Activated T-helper 1 cell treated with anti-CD3 and anti-CD28 coated beads, Interleukin-12 subunit alpha, Interleukin-12 subunit beta, Interleukin-2, Interleukin-4 antibody, amounts not matched to agents 30 ng/mL and 10 ng/mL and 1 ng/mL, durations not matched to agents 14 hours and 24 hours and 36 hours (primary cell): ENCODE measurements at regions of chr1 and their contacts with region 1.

Region 1: DNA sequence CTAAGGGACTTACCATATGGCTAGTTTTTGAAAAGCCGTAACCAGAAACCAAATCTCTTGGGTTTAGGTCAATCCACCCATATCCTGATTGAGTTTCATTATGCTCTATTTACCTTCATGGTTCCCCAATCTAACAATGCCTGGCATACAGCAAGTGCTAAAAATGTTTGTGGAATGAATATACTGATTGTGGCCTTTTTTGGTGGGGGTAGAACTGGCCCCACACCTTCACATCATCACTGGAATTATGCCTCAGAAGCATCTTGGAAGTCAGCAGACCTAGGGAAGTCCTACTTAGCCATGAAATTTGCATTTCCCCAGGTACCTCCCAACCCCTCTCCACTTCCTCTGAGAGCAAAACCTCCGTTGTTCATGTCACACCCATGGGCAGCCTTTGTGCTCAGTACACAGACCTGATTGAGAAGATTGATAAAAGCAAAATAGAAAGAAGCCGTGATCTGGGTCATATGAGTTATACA is 17.8 kb upstream of the SLAMF1 start:
- DNase-seq: no peak
- H3K4me3 Mint-ChIP-seq: peak overlapping the region; percentile 81
- H3K27ac Mint-ChIP-seq: peak overlapping the region; percentile 96
- H3K4me1 Mint-ChIP-seq: peaks cover 84% of the 10 kb centered on the region
- H3K27me3 Mint-ChIP-seq: no peaks in the 10 kb centered on the region

Region 2: DNA sequence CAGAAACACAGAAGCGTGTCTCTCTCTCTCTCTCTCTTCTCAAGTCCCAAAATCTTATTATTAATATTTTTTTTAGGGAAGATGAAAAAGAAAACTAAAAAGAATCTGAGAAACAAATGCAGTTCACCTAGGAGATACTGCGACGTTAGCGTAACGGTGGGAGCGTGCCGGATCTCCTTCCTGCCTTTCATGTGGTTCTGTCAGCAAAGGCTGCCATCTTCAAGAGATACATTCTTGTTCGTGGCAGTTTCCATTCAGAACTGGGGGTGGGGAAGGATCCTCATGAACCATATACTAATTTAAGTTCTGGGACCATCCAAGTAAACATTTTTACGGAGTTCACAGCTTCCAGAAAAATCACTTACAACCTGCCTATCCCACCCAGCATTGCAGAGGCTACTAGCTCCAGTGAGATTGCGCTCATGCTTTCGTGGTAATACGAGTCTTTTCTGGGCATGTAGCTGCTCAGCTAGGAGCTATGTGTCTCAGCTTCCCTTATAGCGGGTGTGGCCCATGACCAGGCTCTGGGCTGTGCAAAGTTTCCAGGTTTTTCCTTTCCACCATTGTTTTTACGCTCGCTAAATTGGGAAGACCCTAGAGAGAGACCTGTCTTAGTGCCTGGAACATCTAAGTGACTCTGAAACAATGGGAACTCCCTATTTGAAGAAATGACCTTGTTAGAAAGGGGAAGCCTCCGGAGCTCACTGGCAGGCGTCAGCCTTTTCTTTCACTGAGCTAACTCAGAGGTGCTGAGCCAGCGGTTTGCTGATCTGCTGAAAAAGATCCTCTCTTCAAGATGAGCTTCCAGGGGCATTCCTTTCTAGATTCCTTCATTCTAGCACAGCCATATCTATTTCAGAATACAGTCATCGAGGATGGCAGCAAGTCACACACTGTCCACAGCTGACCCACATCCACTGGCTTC is 35.1 kb before region 1 on chr1:
- intact Hi-C with region 1: loop called (anchors 1 kb)
- DNase-seq: peak; percentile 76
- H3K4me3 Mint-ChIP-seq: peak overlapping the region; percentile 69
- H3K27ac Mint-ChIP-seq: peak overlapping the region; percentile 99
- H3K4me1 Mint-ChIP-seq: peaks cover 98% of the 10 kb centered on the region
- H3K27me3 Mint-ChIP-seq: no peaks in the 10 kb centered on the region

Region 3: DNA sequence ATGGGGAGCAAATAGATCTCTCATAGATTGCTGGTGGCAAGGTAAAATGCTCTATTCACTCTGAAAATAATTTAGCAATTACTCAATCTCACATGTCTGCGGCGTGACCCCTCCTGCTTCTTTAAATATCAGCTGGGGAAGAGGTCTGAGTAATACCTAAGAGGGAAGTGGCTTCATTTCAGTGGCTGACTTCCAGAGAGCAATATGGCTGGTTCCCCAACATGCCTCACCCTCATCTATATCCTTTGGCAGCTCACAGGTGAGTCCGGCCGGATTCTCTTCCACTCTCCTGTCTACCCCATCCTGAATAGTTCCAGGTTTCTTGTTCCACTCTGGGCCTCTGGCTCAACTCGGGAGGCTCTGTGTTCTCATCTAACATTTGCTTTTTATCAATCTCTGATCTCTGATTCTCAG is 74.5 kb after region 1 on chr1 and contains the start of gene SLAMF7:
- intact Hi-C with region 1: no loop called
- DNase-seq: no peak
- H3K4me3 Mint-ChIP-seq: peak within 1 kb of the TSS; percentile 90
- H3K27ac Mint-ChIP-seq: peak within 1 kb of the TSS; percentile 95
- H3K4me1 Mint-ChIP-seq: peaks cover 68% of the 10 kb centered on the region
- H3K27me3 Mint-ChIP-seq: no peaks in the 10 kb centered on the region
- total RNA-seq, gene SLAMF7: 43.7 and 53.6 TPM in 2 replicates